MCF 10A (cell line): ENCODE measurements at regions of chr1 and their contacts with region 1.

Region 1: DNA sequence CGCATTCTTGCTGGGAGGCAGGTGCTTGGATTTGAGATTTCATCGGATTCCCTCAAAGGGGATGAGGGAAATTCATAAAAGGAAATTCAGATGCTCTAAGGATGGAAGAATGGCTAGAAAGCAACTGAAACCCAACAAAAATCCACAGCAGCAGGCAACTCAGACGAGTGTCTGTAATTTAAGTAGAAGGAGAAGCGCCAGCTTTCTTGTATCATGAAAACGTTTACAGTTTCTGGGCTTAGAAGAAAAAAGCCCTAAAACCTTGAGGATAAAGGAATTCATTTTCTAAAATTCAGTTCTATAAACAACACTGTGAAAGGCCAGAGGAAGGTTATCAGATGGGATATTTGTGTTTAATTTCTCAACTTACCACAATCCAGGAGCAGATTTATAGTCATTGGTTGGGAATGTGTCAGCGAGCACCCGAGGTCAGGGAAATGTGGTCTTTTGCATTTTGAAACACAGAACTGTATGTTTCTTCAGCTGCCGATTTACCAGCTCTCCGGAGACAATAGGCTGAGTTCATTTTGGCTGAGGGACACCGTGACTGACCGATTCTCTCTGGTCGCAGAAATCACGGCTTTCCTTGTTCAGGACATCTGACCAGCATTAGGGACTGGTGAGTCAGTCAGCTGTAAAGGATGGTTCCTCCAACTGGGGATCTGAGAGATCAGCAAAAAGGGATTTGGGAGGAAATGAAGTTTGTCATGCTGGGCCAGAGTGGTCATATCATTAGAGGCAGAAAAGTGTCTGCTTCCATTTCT is 111.6 kb upstream of the ERRFI1 start:
- DNase-seq: peak; percentile 85
- H3K4me3 Mint-ChIP-seq: peak overlapping the region; percentile 55
- H3K27ac Mint-ChIP-seq: peak overlapping the region; percentile 93
- H3K4me1 Mint-ChIP-seq: peaks cover 44% of the 10 kb centered on the region
- H3K27me3 Mint-ChIP-seq: no peaks in the 10 kb centered on the region
- CTCF ChIP-seq: no peak

Region 2: GRCh38 chr1:7983086-7983778 is 154.4 kb before region 1 on chr1:
- CTCF ChIA-PET with region 1: no interaction called
- POLR2A ChIA-PET with region 1: no interaction called
- intact Hi-C with region 1: no loop called
- DNase-seq: no peak
- H3K4me3 Mint-ChIP-seq: no peak overlapping the region
- H3K27ac Mint-ChIP-seq: peak overlapping the region; percentile 54
- H3K4me1 Mint-ChIP-seq: peaks cover 6% of the 10 kb centered on the region
- H3K27me3 Mint-ChIP-seq: no peaks in the 10 kb centered on the region
- CTCF ChIP-seq: no peak

Region 3: GRCh38 chr1:8090241-8090702 is 47.4 kb before region 1 on chr1:
- CTCF ChIA-PET with region 1: interaction called, 4 read pairs
- POLR2A ChIA-PET with region 1: interaction called, 114 read pairs
- intact Hi-C with region 1: no loop called
- DNase-seq: peak; percentile 49
- H3K4me3 Mint-ChIP-seq: no peak overlapping the region
- H3K27ac Mint-ChIP-seq: peak overlapping the region; percentile 91
- H3K4me1 Mint-ChIP-seq: peaks cover 55% of the 10 kb centered on the region
- H3K27me3 Mint-ChIP-seq: no peaks in the 10 kb centered on the region
- CTCF ChIP-seq: no peak

Region 4: GRCh38 chr1:8154621-8155052 is 17.0 kb after region 1 on chr1:
- CTCF ChIA-PET with region 1: interaction called, 6 read pairs
- POLR2A ChIA-PET with region 1: interaction called, 28 read pairs
- intact Hi-C with region 1: no loop called
- DNase-seq: peak; percentile 91
- H3K4me3 Mint-ChIP-seq: peak overlapping the region; percentile 13
- H3K27ac Mint-ChIP-seq: peak overlapping the region; percentile 98
- H3K4me1 Mint-ChIP-seq: peaks cover 14% of the 10 kb centered on the region
- H3K27me3 Mint-ChIP-seq: no peaks in the 10 kb centered on the region
- CTCF ChIP-seq: no peak

Region 5: GRCh38 chr1:8189931-8190483 is 52.3 kb after region 1 on chr1:
- CTCF ChIA-PET with region 1: no interaction called
- POLR2A ChIA-PET with region 1: interaction called, 11 read pairs
- intact Hi-C with region 1: no loop called
- DNase-seq: peak; percentile 70
- H3K4me3 Mint-ChIP-seq: no peak overlapping the region
- H3K27ac Mint-ChIP-seq: peak overlapping the region; percentile 91
- H3K4me1 Mint-ChIP-seq: peaks cover 21% of the 10 kb centered on the region
- H3K27me3 Mint-ChIP-seq: no peaks in the 10 kb centered on the region
- CTCF ChIP-seq: no peak

Region 6: DNA sequence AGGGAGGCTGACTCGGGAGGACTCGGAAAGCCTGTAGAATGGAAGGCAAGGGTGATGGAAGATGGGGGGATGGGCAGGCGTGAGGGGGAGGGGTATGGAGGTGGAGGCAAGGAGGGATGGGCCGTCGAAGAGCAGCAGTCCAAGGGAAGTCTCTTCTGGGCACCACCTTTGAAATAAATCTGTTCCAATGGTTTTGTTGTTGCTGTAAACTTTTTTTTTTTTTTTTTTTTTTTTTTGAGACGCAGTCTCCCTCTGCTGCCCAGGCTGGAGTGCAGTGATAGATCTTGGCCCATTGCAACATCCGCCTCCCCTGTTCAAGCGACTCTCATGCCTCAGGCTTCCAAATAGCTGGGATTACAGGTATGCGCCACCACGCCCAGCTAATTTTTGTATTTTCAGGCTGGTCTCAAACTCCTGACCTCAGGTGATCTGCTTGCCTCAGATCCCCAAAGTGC is 101.2 kb after region 1 on chr1:
- CTCF ChIA-PET with region 1: interaction called, 3 read pairs
- POLR2A ChIA-PET with region 1: interaction called, 4 read pairs
- intact Hi-C with region 1: loop called (anchors 2 kb)
- DNase-seq: peak; percentile 88
- H3K4me3 Mint-ChIP-seq: no peak overlapping the region
- H3K27ac Mint-ChIP-seq: peak overlapping the region; percentile 86
- H3K4me1 Mint-ChIP-seq: peaks cover 14% of the 10 kb centered on the region
- H3K27me3 Mint-ChIP-seq: no peaks in the 10 kb centered on the region
- CTCF ChIP-seq: peak; percentile 37